ENCODE measurements at regions of chr1 and their contacts with region 1.

Region 1: DNA sequence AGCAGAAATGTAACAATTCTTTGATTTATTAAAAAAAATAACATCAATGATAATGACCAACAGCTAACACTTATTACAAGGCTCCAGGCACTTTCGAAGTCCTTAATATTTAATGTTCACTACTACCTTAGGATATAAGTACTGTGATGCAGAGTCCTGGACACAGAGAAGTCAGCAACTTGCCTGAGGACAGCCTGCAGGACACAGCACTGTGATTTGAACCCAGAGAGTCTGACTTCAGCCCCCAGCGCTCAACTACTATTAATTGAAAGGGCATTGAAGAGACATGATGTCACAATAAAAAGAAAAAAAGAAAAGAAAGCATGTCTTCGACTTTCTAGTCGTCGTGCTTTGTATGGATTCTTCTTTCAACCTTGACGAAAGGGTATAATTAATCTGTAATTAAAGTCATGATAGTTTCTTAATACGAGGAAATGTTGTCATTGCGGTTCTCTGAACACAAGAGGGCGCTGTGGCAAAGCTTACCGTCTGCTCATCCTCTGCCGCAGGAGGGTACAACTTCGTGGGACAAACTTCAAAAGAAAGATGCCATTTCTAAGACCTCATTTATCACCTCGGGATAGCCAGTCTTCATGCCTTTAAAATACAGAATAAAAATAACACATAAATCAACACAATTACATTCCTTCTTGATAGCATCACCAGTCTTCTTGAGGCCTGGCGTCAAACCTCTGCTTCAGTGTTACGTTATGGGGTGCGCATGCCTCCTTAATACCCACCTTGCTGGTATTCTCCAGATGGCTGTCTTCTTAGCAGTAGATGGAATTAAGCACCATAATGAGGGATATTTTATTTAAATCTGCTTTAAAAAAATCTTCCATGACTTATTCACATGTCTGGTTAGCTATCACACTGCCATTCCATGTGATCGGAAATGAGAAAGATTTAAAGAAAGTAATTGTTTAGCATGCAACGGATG is 240.1 kb downstream of the DISC1 start:
- DNase-seq: peak in 8 of 10 donors; percentile 42 to 93 (median 68)

Region 2: GRCh38 chr1:231828182-231828920 is 38.3 kb before region 1 on chr1:
- intact Hi-C with region 1: no loop called
- DNase-seq: no peak

Region 3: GRCh38 chr1:233240829-233241682 is 1374.4 kb after region 1 on chr1:
- intact Hi-C with region 1: loop called (anchors 2 kb)
- DNase-seq: peak; percentile 56 to 95 (median 75)

Measured in posterior cingulate gyrus (tissue), 11 donors.